ENCODE measurements at regions of chr17 and their contacts with region 1.

Region 1: GRCh38 chr17:40317880-40318829 is 9.2 kb downstream of the RARA start:
- DNase-seq: peak; percentile 94
- H3K4me3 Mint-ChIP-seq: peak overlapping the region; percentile 90
- H3K27ac Mint-ChIP-seq: peak overlapping the region; percentile 93
- H3K4me1 Mint-ChIP-seq: peaks cover 76% of the 10 kb centered on the region
- H3K27me3 Mint-ChIP-seq: no peaks in the 10 kb centered on the region

Region 2: GRCh38 chr17:40331743-40332641 is 13.8 kb after region 1 on chr17:
- CTCF ChIA-PET with region 1: interaction called, 20 read pairs
- POLR2A ChIA-PET with region 1: interaction called, 129 read pairs
- DNase-seq: no peak
- H3K4me3 Mint-ChIP-seq: peak overlapping the region; percentile 54
- H3K27ac Mint-ChIP-seq: peak overlapping the region; percentile 64
- H3K4me1 Mint-ChIP-seq: peaks cover 87% of the 10 kb centered on the region
- H3K27me3 Mint-ChIP-seq: no peaks in the 10 kb centered on the region

Region 3: DNA sequence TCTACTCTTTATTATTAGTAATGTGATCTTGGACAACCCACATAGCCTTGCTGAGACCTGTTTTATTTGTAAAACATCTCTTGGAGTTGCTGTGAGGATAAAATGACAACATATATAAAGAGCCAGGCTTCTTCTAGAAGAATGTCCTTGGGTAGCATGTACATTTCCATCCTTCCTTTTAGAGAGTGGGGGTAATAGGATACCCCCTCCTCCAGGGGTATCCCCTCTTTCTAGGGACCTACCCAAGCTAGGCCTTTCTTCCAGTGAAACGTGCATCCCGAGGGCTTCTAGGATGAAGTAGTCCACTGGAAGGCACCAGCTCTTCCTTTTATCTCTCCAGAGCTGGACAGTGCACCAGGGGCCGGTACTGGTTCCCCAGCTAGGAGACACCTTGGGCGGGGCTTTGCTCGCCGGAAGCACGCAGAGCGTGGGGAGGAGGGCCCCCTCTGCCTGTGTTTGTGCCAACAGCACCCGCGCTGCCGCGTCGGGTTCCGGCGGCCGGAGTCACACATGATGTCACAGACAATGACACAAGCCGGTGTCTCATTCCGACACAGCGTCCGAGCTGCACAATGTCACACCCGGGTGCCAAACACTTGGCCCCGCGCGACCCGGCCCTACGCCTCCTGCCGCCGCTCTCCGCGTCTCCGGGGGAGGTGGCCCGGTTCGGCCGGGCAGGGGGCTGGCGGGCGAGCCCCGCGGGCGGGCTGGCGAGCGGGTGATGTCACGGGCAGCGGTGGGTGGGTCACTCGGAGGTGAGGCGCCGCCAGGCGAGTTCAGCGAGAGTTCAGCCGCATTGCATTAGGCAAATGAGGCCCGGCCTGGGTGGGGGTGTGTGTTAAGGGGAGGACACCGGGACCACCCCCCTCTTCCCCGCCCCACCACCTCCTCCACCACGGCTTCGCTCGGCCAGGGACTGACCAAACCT is 23.0 kb after region 1 on chr17:
- CTCF ChIA-PET with region 1: interaction called, 11 read pairs
- POLR2A ChIA-PET with region 1: interaction called, 21 read pairs
- DNase-seq: peak; percentile 91
- H3K4me3 Mint-ChIP-seq: peak overlapping the region; percentile 65
- H3K27ac Mint-ChIP-seq: peak overlapping the region; percentile 84
- H3K4me1 Mint-ChIP-seq: peaks cover 84% of the 10 kb centered on the region
- H3K27me3 Mint-ChIP-seq: no peaks in the 10 kb centered on the region

Region 4: DNA sequence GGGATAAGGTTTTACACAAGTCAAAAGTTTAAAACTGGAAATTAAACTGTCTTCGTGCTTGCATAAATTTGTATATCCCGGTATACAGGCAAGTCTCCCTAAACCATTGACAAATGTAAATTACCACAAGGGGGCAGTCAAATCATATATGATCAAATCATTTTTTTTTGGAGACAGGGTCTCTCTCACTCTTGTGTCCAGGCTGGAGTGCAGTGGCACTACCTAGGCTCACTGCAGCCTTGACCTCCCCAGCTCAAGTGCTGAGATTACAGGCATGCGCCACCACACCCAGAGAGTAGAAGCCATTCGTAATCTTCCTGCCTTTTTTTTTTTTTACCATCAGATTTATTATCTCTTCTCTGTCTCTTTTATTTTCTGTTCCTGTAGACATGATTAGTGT is 81.0 kb after region 1 on chr17:
- CTCF ChIA-PET with region 1: no interaction called
- POLR2A ChIA-PET with region 1: no interaction called
- DNase-seq: no peak
- H3K4me3 Mint-ChIP-seq: no peak overlapping the region
- H3K27ac Mint-ChIP-seq: no peak overlapping the region
- H3K4me1 Mint-ChIP-seq: peaks cover 25% of the 10 kb centered on the region
- H3K27me3 Mint-ChIP-seq: no peaks in the 10 kb centered on the region

Region 5: DNA sequence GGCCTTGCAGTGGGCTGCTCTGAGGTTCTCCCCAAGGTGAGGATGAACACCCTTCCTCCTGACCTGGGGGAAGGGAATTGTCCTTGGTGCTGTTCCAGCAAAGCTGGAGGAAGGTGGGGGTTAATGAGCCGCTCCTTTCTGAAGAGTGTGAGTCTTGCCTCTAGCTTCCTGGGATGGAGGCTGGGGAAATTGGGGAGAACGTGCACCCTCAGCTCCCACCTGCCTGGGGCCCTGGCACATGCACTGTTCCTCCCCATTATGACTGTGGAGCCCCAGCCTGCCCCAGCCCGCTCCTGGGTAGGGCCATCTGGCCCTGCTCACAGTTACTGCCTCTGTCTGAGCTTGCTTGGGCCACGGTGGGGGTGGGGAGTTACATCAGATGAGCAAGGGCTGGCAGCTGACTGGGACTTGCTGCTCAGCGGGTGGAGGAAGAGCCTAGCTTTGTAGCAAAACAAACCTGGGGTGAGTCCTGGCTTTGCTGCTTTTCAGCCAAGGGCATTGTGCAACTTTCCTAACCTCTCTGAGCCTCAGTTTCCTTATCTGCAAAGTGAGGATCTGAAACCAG is 172.2 kb after region 1 on chr17:
- CTCF ChIA-PET with region 1: no interaction called
- POLR2A ChIA-PET with region 1: no interaction called
- DNase-seq: peak; percentile 30
- H3K4me3 Mint-ChIP-seq: no peak overlapping the region
- H3K27ac Mint-ChIP-seq: no peak overlapping the region
- H3K4me1 Mint-ChIP-seq: peaks cover 60% of the 10 kb centered on the region
- H3K27me3 Mint-ChIP-seq: peaks cover 5% of the 10 kb centered on the region